ENCODE measurements at regions of chr18 and their contacts with region 1.

Region 1: GRCh38 chr18:3245853-3246634 is 1.6 kb upstream of the MYL12A start:
- DNase-seq: peak; percentile 79 to 88
- H3K4me3 ChIP-seq: peak overlapping the region; percentile 86
- H3K27ac ChIP-seq: peak overlapping the region; percentile 87
- H3K4me1 ChIP-seq: peaks cover 32% of the 10 kb centered on the region
- H3K27me3 ChIP-seq: no peaks in the 10 kb centered on the region
- CTCF ChIP-seq: peak; percentile 96

Region 2: DNA sequence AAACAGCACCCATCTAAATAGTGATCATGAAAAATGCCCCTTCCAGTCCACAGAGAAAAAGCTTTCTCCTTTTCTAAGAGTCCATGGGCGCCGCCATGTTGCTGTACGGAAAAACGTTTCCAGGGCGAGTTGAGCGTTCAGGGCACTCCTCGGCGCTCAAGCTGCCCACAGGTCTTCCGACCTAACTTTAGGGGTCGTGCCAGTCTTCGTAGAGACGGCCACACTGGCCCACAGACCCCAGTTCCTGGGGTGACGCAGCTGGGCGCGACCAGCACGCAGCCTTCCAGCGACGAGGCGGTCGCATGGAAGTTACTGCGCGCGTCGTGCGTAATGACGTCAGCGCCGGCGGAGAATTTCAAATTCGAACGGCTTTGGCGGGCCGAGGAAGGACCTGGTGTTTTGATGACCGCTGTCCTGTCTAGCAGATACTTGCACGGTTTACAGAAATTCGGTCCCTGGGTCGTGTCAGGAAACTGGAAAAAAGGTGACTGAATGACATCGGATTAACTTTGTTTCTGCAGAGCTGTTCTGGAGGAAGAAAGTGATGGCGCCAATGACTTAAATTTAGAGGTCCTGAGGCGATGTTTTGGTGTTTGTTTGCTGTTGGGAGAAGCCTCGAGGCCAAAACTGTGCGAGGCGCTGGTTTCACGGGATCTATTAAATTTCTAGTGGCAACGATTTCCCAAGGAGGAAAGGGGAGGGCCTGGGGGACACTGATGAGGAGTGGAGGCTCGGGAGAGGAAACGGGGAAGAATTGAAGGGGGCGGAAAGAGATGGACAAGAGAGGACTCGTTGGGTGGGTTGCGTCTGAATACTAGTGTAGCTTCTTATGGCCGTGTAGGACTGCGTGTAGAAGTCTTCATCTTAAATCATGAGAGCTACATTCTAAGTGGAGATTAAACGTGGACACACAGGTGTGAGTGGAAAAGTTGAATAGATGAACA is 674.6 kb before region 1 on chr18 and contains the starts of genes METTL4 and NDC80:
- CTCF ChIA-PET with region 1: no interaction called
- POLR2A ChIA-PET with region 1: no interaction called
- intact Hi-C with region 1: loop called (anchors 5 kb)
- DNase-seq: peak; percentile 78 to 86
- H3K4me3 ChIP-seq: peak within 1 kb of the TSS; percentile 88
- H3K27ac ChIP-seq: peak within 1 kb of the TSS; percentile 98
- H3K4me1 ChIP-seq: peaks cover 39% of the 10 kb centered on the region
- H3K27me3 ChIP-seq: no peaks in the 10 kb centered on the region
- CTCF ChIP-seq: no peak
- total RNA-seq, gene METTL4: 21.8 and 23.9 TPM in 2 replicates
- total RNA-seq, gene NDC80: 71.7 and 89.2 TPM in 2 replicates

Region 3: DNA sequence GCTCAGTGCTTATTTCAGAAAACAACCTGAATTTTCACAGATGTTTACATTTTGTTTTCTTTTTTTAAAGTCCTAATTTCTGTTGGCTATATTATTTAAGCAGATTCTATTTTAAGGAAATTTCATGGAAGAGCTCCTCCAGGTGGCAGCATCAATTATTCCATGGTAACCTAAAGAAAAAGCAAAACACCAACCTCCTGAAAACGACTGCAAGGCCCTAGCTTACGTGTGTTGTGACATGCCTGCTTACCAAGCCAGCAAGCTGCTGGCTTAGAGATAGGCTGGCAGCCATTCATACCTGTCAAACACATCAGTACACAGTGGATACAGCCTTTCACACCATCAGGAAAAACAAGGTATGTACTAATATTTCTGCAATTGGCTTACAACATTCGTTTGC is 298.0 kb before region 1 on chr18:
- CTCF ChIA-PET with region 1: interaction called, 15 read pairs
- POLR2A ChIA-PET with region 1: interaction called, 5 read pairs
- intact Hi-C with region 1: no loop called
- DNase-seq: no peak
- H3K4me3 ChIP-seq: no peak overlapping the region
- H3K27ac ChIP-seq: no peak overlapping the region
- H3K4me1 ChIP-seq: no peaks in the 10 kb centered on the region
- H3K27me3 ChIP-seq: no peaks in the 10 kb centered on the region
- CTCF ChIP-seq: peak; percentile 53

Region 4: DNA sequence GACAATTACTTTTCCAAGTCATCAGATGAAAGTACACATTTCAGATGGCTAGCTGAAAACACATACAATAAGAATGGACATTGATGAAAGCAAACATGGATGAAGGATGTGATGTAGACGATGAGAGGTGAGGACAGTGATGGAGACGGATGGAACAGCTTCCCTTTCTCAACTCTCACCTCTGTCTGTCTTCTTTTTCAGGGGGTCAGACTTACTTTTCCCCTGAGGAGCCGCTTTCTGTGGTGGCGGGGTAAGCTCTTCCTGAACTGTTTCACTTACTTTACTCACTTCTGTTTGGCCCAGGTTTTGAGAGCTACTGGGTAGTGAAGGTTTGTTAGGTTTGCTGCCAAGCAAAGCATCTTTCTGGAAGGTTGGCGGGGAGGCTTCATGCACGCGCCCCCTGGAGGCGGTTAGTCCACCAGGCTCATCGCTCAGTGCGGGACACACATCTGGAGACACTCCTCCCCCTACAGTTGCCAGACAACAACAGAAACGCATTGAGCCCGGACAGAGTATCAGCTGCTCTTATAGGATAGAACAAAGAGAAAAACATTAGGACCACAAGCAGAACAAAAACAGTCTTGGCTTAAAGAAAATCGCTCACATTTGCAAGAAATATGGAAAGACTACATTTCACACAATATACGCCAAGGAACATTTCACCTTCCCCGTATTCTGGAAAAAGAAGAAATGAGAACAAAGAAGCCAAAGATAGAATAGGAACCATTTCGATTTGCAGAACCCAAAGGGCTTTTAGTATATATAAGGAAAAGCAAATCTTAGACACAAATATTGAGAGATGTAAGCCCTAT is 116.8 kb before region 1 on chr18:
- CTCF ChIA-PET with region 1: no interaction called
- POLR2A ChIA-PET with region 1: no interaction called
- intact Hi-C with region 1: no loop called
- DNase-seq: peak; percentile 38 to 40
- H3K4me3 ChIP-seq: no peak overlapping the region
- H3K27ac ChIP-seq: no peak overlapping the region
- H3K4me1 ChIP-seq: no peaks in the 10 kb centered on the region
- H3K27me3 ChIP-seq: no peaks in the 10 kb centered on the region
- CTCF ChIP-seq: peak; percentile 63

Region 5: DNA sequence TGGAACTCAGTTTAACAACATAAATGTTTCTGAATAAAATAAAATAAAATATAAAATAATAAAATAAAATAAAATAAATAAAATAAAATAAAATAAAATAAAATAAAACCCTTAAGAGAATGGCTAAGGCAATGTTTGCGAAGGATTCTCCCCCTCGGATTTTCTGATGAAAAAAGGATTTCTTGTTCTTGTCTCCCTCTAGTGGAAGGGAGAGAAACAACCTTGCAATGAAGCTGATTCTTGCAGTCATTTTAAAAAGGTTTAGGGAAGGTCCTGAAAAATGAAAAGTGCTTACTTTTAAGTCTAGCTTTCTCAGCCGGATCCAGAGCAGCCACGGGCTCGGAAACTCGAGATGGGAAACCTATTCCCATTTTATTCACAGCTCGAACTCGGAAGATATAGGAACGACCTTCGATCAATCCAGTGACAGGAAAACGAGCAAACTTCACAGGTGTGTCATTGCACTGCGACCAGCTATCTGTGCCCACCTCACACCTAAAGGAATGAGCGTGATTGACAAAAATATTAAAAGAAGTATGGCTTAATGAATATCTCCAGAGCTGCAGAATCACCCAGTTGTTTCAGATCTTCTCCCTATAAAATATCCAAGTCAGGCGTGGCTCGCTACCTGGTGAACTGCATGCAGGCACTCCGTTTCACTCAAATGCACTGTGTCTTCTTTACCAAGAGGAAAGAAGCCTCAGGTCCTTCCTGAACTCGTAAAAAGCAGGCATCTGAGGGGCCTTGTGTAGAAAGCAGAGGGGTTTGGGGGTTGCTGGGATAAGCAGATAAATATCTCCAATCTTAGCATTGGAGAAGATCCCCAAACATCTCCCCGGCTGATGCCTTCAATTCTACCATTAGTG is 94.4 kb before region 1 on chr18:
- CTCF ChIA-PET with region 1: interaction called, 5 read pairs
- POLR2A ChIA-PET with region 1: interaction called, 11 read pairs
- intact Hi-C with region 1: loop called (anchors 1 kb)
- DNase-seq: no peak
- H3K4me3 ChIP-seq: no peak overlapping the region
- H3K27ac ChIP-seq: no peak overlapping the region
- H3K4me1 ChIP-seq: peaks cover 9% of the 10 kb centered on the region; the same call in 1 of the 2 replicates
- H3K27me3 ChIP-seq: no peaks in the 10 kb centered on the region
- CTCF ChIP-seq: peak; percentile 91

Region 6: GRCh38 chr18:3261371-3262246 is 15.6 kb after region 1 on chr18 and contains the start of gene MYL12B:
- CTCF ChIA-PET with region 1: no interaction called
- POLR2A ChIA-PET with region 1: interaction called, 21 read pairs
- intact Hi-C with region 1: loop called (anchors 1 kb)
- DNase-seq: peak; percentile 77 to 89
- H3K4me3 ChIP-seq: peak within 1 kb of the TSS; percentile 100
- H3K27ac ChIP-seq: peak within 1 kb of the TSS; percentile 93
- H3K4me1 ChIP-seq: peaks cover 39% of the 10 kb centered on the region
- H3K27me3 ChIP-seq: no peaks in the 10 kb centered on the region
- CTCF ChIP-seq: no peak
- total RNA-seq, gene MYL12B: 381 and 383 TPM in 2 replicates

Region 7: GRCh38 chr18:3293196-3293951 is 47.3 kb after region 1 on chr18:
- CTCF ChIA-PET with region 1: no interaction called
- POLR2A ChIA-PET with region 1: no interaction called
- intact Hi-C with region 1: no loop called
- DNase-seq: no peak
- H3K4me3 ChIP-seq: no peak overlapping the region
- H3K27ac ChIP-seq: no peak overlapping the region
- H3K4me1 ChIP-seq: 0 out of 2 replicates have a peak, but pooled peaks cover 8% of the 10 kb centered on the region
- H3K27me3 ChIP-seq: no peaks in the 10 kb centered on the region
- CTCF ChIP-seq: no peak

Region 8: GRCh38 chr18:3652380-3653262 is 406.6 kb after region 1 on chr18:
- CTCF ChIA-PET with region 1: no interaction called
- POLR2A ChIA-PET with region 1: interaction called, 12 read pairs
- intact Hi-C with region 1: no loop called
- DNase-seq: peak; percentile 97 to 99
- H3K4me3 ChIP-seq: peak overlapping the region; percentile 63
- H3K27ac ChIP-seq: peak overlapping the region; percentile 99
- H3K4me1 ChIP-seq: peaks cover 80% of the 10 kb centered on the region
- H3K27me3 ChIP-seq: no peaks in the 10 kb centered on the region
- CTCF ChIP-seq: 0 out of 2 replicates have a peak, but pooled peaks have one; percentile 19